ENCODE measurements at regions of chr1 and their contacts with region 1.

Region 1: DNA sequence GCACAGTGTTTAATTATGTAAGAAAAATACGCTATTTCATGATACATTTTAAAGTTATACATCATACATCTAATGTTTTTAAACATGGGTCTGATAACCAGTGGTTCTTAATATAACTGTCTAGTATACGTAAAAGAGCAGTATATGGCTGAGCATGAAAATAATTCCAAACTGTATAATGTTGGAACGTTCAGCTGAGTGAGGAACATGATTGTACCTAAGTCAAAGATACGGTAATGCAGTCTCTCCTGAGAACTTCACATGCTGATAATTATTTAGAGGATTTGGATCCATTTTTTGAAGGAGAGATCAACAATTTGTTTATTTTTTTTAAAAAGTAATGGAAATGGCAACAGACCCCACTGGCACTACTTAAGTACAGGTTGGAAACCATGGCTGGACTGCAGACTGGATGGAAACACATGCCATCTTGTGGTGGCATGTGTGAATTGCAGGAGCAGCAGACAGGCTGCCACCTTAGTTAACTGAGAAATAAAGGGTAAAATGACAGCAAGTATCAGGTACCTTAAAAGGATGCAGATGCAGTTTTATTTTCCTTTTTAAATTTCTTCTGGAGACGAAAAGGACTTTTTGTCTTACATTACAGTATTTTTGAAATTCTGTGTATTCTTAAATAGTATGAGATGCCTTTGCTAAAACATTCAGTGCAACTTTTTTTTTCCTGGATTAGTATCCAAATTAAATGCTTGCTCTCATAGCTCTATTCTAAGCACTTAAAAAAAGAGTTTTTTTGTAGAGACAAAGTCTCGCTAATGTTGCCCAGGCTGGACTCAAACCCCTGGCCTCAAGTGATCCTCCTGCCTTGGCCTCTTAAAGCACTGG is 73.8 kb downstream of the MTR start:
- DNase-seq: no peak
- ATAC-seq: no peak

Region 2: DNA sequence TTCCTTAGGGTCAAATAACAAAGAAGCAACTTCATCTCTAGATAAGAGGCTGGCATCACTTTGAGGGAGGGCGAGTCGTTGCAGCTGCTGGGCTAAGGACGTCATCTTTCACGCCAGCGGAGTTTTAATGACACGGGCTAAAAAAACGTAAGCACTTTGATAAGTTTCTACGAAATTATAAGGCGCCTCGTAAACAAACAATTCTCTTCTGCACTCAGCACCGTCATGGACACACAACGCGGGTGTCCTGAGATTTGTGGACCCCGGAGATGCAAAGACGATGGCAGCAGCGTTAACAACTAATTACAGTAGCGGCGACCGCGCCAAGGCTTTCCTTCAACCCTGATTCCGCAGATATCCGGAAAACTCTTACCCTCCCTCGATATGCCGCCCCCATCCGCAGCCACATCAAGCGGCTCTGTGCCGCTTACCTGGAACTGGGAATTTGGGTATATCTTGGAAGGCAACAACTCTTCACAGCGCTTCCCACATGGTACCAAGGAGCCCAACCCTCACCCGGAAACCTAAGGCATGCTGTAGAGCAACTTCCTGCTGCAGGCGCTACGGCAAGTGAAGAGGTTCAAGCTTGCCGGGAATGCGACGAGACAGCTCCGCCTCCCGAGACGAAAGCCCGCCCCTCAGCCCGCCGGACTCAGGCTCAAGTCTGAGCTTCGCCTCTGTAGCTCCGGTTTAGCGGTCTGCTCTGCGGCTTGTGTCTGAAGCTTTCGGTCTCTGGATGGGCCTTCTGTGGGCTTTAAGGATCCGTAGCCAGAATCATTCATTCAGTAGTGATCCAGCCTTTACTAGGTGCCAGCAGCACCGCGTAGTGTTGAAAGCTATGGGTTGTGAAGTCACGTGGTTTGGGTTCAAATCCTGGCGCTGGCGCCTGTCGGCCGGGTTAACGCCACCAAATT is 264.6 kb before region 1 on chr1 and contains the start of gene HEATR1:
- intact Hi-C with region 1: loop called (anchors 10 kb)
- DNase-seq: peak; percentile 95
- ATAC-seq: peak; percentile 97
- total RNA-seq, gene HEATR1: 9.6 TPM

Region 3: DNA sequence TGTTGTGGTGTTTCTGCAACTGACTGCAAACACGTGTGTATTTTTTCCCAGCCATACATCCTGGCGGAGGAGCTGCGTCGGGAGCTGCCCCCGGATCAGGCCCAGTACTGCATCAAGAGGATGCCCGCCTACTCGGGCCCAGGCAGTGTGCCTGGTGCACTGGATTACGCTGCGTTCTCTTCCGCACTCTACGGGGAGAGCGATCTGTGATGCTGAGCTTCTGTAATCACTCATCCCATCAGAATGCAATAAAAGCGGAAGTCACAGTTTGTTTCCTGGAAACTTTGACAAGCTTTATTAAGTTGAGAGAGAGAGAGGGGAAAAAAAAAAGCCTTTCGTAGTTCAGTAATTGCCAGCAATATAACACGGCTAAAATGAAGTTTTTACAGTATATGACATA is 106.4 kb before region 1 on chr1:
- intact Hi-C with region 1: loop called (anchors 5 kb)
- DNase-seq: no peak
- ATAC-seq: no peak

Region 4: GRCh38 chr1:236795035-236795756 is 73.7 kb before region 1 on chr1 and contains the start of gene MTR:
- intact Hi-C with region 1: loop called (anchors 5 kb)
- DNase-seq: peak; percentile 99
- ATAC-seq: peak; percentile 99
- total RNA-seq, gene MTR: 49.0 TPM

Region 5: GRCh38 chr1:237786066-237786719 is 917.3 kb after region 1 on chr1:
- intact Hi-C with region 1: no loop called
- DNase-seq: no peak
- ATAC-seq: no peak